ENCODE measurements at regions of chr2 and their contacts with region 1.

Region 1: GRCh38 chr2:202299712-202300111 is 34.1 kb downstream of the NOP58 start:
- DNase-seq: no peak
- ATAC-seq: peak; percentile 83
- H3K4me3 Mint-ChIP-seq: no peak overlapping the region
- H3K27ac Mint-ChIP-seq: peak overlapping the region; percentile 86
- H3K4me1 Mint-ChIP-seq: peaks cover 44% of the 10 kb centered on the region
- H3K27me3 Mint-ChIP-seq: no peaks in the 10 kb centered on the region

Region 2: DNA sequence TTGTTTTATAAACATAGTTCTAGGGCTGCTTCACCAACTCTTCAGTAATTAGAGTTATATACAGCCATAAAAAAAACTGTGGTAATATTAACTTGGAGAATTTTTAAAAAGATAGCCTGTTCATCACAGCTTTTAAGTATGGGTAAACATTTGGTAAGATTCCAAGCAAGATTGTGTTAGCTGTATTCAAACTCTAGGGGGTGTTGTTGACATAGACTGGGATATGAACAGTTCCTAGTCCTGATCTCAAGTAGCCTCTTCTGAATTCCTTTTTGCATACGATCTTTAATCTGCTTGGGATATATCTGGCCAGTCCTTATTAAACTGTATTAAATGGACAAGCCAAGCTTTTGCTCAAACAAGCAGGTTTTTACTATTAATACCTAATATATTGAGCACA is 20.8 kb before region 1 on chr2:
- CTCF ChIA-PET with region 1: interaction called, 7 read pairs
- POLR2A ChIA-PET with region 1: interaction called, 9 read pairs
- intact Hi-C with region 1: loop called (anchors 1 kb)
- DNase-seq: no peak
- ATAC-seq: no peak
- H3K4me3 Mint-ChIP-seq: no peak overlapping the region
- H3K27ac Mint-ChIP-seq: peak overlapping the region; percentile 84
- H3K4me1 Mint-ChIP-seq: peaks cover 46% of the 10 kb centered on the region
- H3K27me3 Mint-ChIP-seq: no peaks in the 10 kb centered on the region

Region 3: DNA sequence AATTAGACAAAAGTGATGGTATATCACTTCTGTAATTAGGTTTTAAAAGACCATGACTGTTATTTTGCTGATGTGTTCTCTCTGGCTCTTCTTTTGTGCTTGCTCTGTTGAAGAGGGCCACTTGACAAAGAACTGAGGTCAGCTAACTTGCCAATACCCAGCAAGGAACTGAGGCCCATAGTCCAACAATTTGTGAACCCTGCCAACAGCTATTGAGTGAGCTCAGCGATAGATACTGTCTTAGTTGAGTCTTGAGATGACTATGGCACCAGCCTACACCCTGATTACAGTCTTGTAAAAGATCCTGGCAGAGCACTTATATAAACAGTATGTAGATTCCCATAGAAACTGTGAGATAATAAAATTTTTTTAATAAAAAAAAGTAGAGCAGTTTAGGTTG is 179.4 kb after region 1 on chr2:
- CTCF ChIA-PET with region 1: no interaction called
- POLR2A ChIA-PET with region 1: no interaction called
- intact Hi-C with region 1: no loop called
- DNase-seq: no peak
- ATAC-seq: no peak
- H3K4me3 Mint-ChIP-seq: no peak overlapping the region
- H3K27ac Mint-ChIP-seq: no peak overlapping the region
- H3K4me1 Mint-ChIP-seq: peaks cover 13% of the 10 kb centered on the region
- H3K27me3 Mint-ChIP-seq: no peaks in the 10 kb centered on the region

Measured in activated CD4-positive, alpha-beta T cell treated with anti-CD3 and anti-CD28 coated beads for 36 hours (primary cell).